ENCODE measurements at regions of chr6 and their contacts with region 1.

Region 1: GRCh38 chr6:90478789-90479602 is 107.9 kb downstream of the MAP3K7 start:
- DNase-seq: peak; percentile 82
- ATAC-seq: peak; percentile 100

Region 2: GRCh38 chr6:89734526-89734925 is 744.5 kb before region 1 on chr6:
- intact Hi-C with region 1: no loop called
- DNase-seq: no peak
- ATAC-seq: no peak

Region 3: GRCh38 chr6:89940225-89941027 is 538.6 kb before region 1 on chr6:
- intact Hi-C with region 1: loop called (anchors 1 kb)
- DNase-seq: peak; percentile 50
- ATAC-seq: peak; percentile 96

Region 4: GRCh38 chr6:89970609-89971337 is 508.2 kb before region 1 on chr6:
- intact Hi-C with region 1: loop called (anchors 1 kb)
- DNase-seq: peak; percentile 44
- ATAC-seq: peak; percentile 85

Region 5: DNA sequence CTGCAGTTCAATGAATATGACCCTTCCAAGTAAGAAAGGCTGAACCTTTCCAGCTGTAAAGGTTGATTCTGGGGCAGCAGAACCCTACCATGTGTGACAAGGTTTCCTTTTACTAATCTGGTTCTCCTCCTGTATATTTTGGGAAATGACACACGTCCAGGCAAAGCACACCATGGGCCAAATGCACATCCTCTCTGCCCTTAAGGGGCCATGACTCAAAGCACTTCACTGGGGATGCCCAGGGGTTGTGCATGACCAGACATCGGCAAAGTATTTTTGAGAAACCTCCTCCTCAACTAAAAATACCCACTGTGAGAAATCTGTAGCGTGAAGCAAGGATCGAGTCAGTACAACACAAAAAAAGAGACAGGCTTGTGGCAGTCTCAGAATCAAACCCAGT is 357.0 kb before region 1 on chr6:
- intact Hi-C with region 1: no loop called
- DNase-seq: no peak
- ATAC-seq: peak; percentile 72

Region 6: GRCh38 chr6:90393232-90393884 is 85.6 kb before region 1 on chr6:
- intact Hi-C with region 1: loop called (anchors 10 kb)
- DNase-seq: no peak
- ATAC-seq: peak; percentile 72

Region 7: GRCh38 chr6:90434094-90434493 is 44.9 kb before region 1 on chr6:
- intact Hi-C with region 1: no loop called
- DNase-seq: no peak
- ATAC-seq: peak; percentile 69

Measured in left ventricle myocardium superior (tissue), 1 donor.